Right ventricle myocardium inferior (tissue), 1 donor: ENCODE measurements at regions of chr17 and their contacts with region 1.

Region 1: GRCh38 chr17:28912938-28913333 is 10.1 kb upstream of the DHRS13 start:
- DNase-seq: no peak
- ATAC-seq: no peak

Region 2: DNA sequence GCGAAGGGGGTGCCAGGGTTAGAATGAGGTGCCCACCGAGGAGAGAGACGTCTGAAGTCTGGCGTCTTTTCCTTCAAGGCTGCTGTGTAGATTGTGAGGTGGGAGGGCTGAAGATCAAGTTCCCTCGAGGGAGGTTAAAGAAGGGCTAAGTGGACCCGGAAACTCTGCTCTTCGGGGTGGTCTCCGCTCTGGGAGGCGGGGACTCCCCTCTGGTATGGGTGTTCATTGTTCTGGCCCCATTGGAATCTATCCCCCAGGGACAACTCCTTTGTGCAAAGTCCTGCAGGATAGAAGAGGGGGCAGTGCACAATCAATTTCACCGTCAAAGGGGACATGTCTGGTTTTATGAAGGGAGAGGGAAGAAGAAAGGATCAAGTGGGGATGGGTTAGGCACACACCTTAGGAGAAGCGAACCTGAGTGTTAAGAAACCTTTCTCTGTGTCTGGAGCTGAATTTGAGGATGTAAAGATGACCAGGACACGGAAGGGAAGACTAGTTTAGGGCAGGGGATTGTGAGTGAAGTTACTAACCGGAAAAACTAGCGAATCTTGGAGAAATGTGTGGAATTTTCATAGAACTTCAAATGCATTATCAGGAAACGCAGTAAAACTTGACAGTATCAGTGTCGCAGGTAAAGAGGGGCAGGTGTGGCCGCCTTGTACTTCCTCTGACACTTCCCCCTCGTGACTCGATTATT is 194.5 kb before region 1 on chr17:
- intact Hi-C with region 1: loop called (anchors 1 kb)
- DNase-seq: no peak
- ATAC-seq: no peak